ENCODE measurements at regions of chr9 and their contacts with region 1.

Region 1: DNA sequence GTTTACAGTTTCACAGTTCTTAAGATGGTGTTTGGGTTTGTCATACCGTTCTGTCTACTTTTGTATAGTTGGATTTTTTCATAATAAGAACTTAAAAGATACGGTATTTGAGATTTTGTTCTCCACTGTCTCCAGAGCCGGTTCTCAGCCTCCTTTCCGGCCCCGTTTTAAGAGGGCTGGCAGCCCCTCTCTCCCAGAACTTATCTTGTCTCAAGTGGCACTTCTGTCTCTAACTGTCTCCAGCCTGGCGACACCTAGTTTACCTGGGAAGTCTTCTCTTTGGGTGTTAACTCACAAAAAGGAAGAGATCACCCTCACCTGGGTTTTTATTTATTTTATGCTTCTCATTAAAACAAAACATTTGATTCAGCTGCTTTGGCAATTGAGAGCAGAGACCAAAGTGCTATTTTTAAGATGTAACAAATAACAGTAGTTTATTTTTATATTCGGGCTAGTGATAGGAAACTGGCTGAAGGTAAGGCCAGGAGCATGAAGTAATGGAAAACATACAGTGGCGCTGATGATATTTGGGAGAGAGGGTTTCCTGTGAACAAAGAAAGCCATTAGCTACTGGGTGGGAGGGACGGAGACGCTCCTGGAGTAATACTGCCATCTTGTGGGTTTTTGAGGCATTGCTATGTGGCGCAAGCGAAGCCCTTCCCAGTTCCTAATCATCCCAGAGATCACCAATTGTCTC is 48.3 kb downstream of the ACER2 start:
- DNase-seq: peak; percentile 31 to 52
- ATAC-seq: peak; percentile 94 to 99
- H3K4me3 ChIP-seq: peak overlapping the region in 3 of 4 donors; percentile 7 to 15 (median 11)
- H3K27ac ChIP-seq: peak overlapping the region; percentile 1 to 50 (median 30)
- H3K4me1 ChIP-seq: peaks cover 6 to 9% of the 10 kb centered on the region in 2 donors
- H3K27me3 ChIP-seq: no peaks in the 10 kb centered on the region
- CTCF ChIP-seq: peak; percentile 86 to 95 (median 94)
- POLR2A ChIP-seq: no peak

Region 2: GRCh38 chr9:18255158-18255629 is 1202.0 kb before region 1 on chr9:
- in situ Hi-C with region 1: loop called in 1 of 4 experiments (anchors 25 kb)
- intact Hi-C with region 1: no loop called
- DNase-seq: peak; percentile 28 to 32
- ATAC-seq: peak; percentile 56 to 58
- H3K4me3 ChIP-seq: no peak overlapping the region
- H3K27ac ChIP-seq: no peak overlapping the region
- H3K4me1 ChIP-seq: no peaks in the 10 kb centered on the region
- H3K27me3 ChIP-seq: no peaks in the 10 kb centered on the region
- CTCF ChIP-seq: peak; percentile 69 to 91 (median 81)
- POLR2A ChIP-seq: no peak

Region 3: GRCh38 chr9:19085295-19085694 is 371.8 kb before region 1 on chr9:
- in situ Hi-C with region 1: no loop called
- intact Hi-C with region 1: loop called (anchors 10 kb)
- DNase-seq: no peak
- ATAC-seq: no peak
- H3K4me3 ChIP-seq: no peak overlapping the region
- H3K27ac ChIP-seq: no peak overlapping the region
- H3K4me1 ChIP-seq: no peaks in the 10 kb centered on the region
- H3K27me3 ChIP-seq: no peaks in the 10 kb centered on the region
- CTCF ChIP-seq: peak in 3 of 5 experiments; percentile 19 to 39 (median 28)
- POLR2A ChIP-seq: no peak

Region 4: DNA sequence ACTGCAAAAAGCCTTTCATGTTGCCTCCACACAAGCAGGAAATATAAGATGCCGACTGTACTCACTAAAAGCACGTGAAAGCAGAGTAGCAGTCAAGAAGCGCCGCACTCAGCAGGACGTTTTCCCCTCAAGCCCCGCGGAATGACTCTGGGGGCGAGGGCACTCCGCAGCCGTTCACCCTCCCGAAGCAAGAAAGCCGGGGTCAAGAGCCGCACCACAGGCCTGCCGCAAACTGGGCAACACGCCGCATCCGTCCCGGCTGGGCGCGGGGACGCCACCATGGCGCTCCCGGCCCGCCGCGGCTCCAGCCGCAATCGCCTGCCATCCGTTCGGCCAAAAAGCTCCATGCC is 77.5 kb before region 1 on chr9:
- in situ Hi-C with region 1: loop called in 3 of 4 experiments (anchors 5 to 10 kb)
- intact Hi-C with region 1: loop called (anchors 1 kb)
- DNase-seq: peak in 1 of 2 donors; percentile 9
- ATAC-seq: peak; percentile 43 to 56
- H3K4me3 ChIP-seq: peak overlapping the region; percentile 79 to 93 (median 90)
- H3K27ac ChIP-seq: peak overlapping the region; percentile 89 to 97 (median 95)
- H3K4me1 ChIP-seq: peaks cover 21 to 27% of the 10 kb centered on the region in 2 donors
- H3K27me3 ChIP-seq: no peaks in the 10 kb centered on the region
- CTCF ChIP-seq: no peak
- POLR2A ChIP-seq: no peak

Measured in gastrocnemius medialis (tissue), 4 donors.